Sigmoid colon (tissue), 7 donors: ENCODE measurements at regions of chr10 and their contacts with region 1.

Region 1: DNA sequence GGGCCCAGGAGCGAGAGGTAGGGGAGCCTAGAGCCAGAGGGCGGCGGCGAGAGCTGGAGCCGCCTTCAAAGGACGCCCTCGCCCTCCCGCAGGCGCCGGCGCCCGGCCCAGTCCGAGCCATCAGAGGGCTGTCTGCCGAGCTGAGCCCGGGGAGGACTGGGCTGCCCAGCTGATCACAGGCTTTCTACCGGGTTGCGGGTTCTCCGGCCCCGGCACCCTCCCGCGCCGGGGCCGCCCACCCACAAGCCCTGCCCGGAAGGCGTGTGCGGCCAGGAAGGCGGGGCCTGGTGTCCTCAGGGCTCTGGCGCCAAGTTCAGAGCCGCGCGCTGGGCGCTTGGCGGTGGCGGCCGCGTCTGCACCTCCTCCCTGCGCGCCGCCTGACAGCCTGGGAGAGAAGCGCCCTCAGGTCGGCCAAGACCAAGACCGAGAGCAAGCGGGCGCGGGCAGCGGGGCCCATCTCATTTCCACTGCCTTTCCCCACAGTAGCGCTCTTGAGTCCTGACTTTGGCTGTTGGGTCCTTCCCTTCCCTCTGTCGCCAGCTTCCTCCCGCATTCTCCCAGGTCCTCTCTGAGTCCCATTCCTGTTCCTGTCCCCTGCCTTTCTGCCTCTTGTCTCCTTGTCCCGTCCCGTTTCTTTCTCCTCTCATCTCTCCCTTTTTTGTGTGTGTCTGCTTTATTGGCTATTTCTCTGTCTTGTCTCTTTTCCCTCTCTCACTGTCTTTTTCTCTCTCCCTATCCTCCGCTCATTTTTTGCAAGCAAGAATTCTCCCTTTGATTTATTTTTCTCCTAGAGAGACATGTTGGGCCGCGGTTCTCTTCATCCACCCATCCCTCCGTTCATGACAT is 60.6 kb upstream of the MSMB start:
- DNase-seq: peak; percentile 78
- H3K4me3 ChIP-seq: peak overlapping the region; percentile 49 to 62 (median 58)
- H3K27ac ChIP-seq: peak overlapping the region in 3 of 4 donors; percentile 47 to 63 (median 61)
- H3K4me1 ChIP-seq: peaks cover 0 to 9% (median 7%) of the 10 kb centered on the region in 4 donors
- H3K27me3 ChIP-seq: no peaks in the 10 kb centered on the region
- CTCF ChIP-seq: peak in 1 of 4 experiments; percentile 7
- EP300 ChIP-seq: no peak
- POLR2A ChIP-seq: no peak

Region 2: DNA sequence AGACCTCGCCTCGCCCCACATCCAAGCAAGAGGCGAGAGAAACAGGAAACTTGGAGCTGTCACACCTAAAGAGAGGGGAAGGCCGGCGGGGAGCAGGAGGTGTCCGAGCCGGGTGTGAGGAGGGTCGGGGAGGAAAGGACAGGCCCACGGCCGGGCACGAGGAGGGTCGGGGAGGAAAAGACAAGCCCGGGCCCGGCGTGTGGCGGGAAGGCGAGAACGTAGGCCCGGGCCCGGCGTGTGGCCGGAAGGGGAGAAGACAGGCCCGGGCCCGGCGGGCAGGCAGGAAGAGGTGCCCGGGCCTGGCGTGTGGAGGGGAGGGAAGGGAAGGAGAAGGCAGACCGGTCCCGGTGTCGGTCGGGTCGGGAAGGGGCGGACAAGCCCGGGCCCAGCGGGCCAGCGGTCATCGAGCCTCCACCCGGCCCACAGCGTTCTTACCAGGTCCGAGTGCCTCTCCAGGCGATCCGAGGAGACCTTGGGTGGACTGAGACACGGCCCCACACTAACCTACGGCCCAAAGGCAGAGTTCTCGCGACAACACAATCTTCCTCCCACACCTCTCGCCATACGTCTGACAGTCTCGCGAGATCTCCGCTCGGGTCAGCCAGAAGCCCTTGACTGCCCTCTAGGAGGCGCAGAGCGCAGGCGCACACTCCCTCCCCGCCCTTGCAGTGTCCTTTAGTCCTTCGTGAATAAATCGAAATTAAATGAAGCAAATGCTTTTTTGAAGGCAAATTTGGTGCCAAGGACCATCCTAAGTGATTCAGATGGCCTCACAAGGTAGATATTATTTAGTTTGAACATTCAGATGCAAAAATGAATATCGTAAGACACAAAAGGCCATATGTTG is 76.3 kb before region 1 on chr10 and contains the start of gene NCOA4:
- intact Hi-C with region 1: loop called (anchors 5 kb)
- DNase-seq: peak; percentile 99
- H3K4me3 ChIP-seq: peak within 1 kb of the TSS; percentile 49 to 87 (median 74)
- H3K27ac ChIP-seq: peak within 1 kb of the TSS; percentile 83 to 93 (median 91)
- H3K4me1 ChIP-seq: peaks cover 0 to 46% (median 44%) of the 10 kb centered on the region in 4 donors
- H3K27me3 ChIP-seq: no peaks in the 10 kb centered on the region
- CTCF ChIP-seq: peak; percentile 33 to 79 (median 64)
- EP300 ChIP-seq: no peak
- POLR2A ChIP-seq: peak; percentile 33 to 68
- total RNA-seq, gene NCOA4: 148 to 192 (median 150) TPM